Activated CD4-positive, alpha-beta T cell treated with anti-CD3 and anti-CD28 coated beads, Interleukin-2, amount 10 ng/mL, durations not matched to agents 7 days and 5 days (primary cell): ENCODE measurements at regions of chr9 and their contacts with region 1.

Region 1: GRCh38 chr9:128818099-128818838 is at the start of gene ENDOG:
- DNase-seq: peak; percentile 97
- H3K4me3 Mint-ChIP-seq: peak within 1 kb of the TSS; percentile 84
- H3K27ac Mint-ChIP-seq: peak within 1 kb of the TSS; percentile 89
- H3K4me1 Mint-ChIP-seq: peaks cover 24% of the 10 kb centered on the region
- H3K27me3 Mint-ChIP-seq: no peaks in the 10 kb centered on the region
- total RNA-seq, gene ENDOG: 10.2 to 11.3 TPM

Region 2: GRCh38 chr9:128694344-128694743 is 123.9 kb before region 1 on chr9:
- CTCF ChIA-PET with region 1: interaction called, 13 read pairs
- POLR2A ChIA-PET with region 1: no interaction called
- DNase-seq: no peak
- H3K4me3 Mint-ChIP-seq: no peak overlapping the region
- H3K27ac Mint-ChIP-seq: no peak overlapping the region
- H3K4me1 Mint-ChIP-seq: peaks cover 20% of the 10 kb centered on the region
- H3K27me3 Mint-ChIP-seq: no peaks in the 10 kb centered on the region

Region 3: DNA sequence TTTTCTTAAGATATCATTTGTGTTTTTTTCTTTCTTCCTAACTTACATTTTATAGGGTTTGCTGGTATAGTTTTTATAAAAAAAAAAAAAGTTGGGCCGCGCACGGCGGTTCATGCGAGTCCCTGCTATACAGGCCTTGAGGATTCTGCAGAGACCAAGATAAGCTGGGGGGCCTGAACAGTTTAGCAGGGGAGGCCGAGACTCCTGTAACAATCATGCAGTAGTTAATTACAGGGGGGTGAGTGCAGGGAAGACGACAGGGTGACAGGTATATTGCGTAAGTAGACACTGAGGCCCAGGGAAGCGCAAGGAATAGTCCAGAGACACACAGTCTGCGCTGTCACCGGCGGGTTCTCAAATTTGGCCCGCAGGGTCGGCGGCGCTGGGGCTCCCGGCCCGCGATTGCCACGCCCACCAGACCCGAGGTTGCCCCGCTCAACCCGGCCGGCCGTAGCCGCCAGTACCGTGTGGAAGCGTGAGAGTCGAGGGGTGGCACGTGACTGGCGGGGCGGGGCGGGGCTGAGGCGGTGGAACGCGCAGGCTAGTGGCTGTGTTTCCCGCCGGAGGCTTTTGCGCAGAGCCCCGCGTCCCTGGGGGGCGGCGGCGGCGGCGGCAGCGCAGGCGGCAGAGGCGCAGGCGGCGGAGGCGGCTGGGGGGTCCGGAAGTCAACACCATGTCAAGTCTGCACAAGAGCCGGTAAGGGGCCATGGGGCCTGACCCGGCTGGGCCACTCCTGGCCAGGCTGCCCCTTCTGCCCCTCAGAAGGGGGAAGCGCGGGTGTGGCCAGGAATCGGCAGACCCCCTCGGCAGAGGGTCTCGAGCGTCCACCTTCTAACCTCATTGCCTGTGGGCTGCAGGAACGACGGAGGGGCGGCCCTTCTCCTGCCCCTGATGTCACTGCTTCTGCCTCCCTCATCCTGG is 31.3 kb before region 1 on chr9 and contains the start of gene TBC1D13:
- CTCF ChIA-PET with region 1: interaction called, 13 read pairs
- POLR2A ChIA-PET with region 1: no interaction called
- DNase-seq: peak; percentile 88
- H3K4me3 Mint-ChIP-seq: peak within 1 kb of the TSS; percentile 97
- H3K27ac Mint-ChIP-seq: peak within 1 kb of the TSS; percentile 94
- H3K4me1 Mint-ChIP-seq: peaks cover 17% of the 10 kb centered on the region
- H3K27me3 Mint-ChIP-seq: no peaks in the 10 kb centered on the region
- total RNA-seq, gene TBC1D13: 18.4 to 21.1 TPM

Region 4: DNA sequence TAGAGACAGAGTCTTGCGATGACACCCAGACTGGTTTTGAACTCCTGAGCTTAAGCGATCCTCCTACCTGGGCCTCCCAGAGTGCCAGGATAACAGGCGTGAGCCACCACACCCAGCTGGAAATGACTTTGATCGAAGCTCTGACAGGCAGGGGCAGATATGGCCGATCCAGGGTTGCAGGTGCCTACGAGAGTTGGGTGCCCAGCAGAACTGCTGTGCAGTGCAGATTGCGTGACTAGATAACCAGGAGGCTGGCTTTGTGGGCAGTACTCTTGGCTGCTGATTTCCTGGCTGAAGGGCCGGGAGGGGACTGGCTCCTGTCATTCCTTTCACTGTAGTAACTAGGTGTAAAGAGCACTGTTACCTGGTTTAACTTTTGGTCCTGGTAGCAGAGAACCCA is 19.4 kb before region 1 on chr9:
- CTCF ChIA-PET with region 1: interaction called, 29 read pairs
- POLR2A ChIA-PET with region 1: interaction called, 5 read pairs
- DNase-seq: no peak
- H3K4me3 Mint-ChIP-seq: no peak overlapping the region
- H3K27ac Mint-ChIP-seq: no peak overlapping the region
- H3K4me1 Mint-ChIP-seq: no peaks in the 10 kb centered on the region
- H3K27me3 Mint-ChIP-seq: no peaks in the 10 kb centered on the region

Region 5: GRCh38 chr9:128829477-128830251 is 11.4 kb after region 1 on chr9 and contains the start of gene SPOUT1:
- CTCF ChIA-PET with region 1: interaction called, 29 read pairs
- POLR2A ChIA-PET with region 1: interaction called, 12 read pairs
- DNase-seq: peak; percentile 96
- H3K4me3 Mint-ChIP-seq: peak within 1 kb of the TSS; percentile 94
- H3K27ac Mint-ChIP-seq: peak within 1 kb of the TSS; percentile 92
- H3K4me1 Mint-ChIP-seq: peaks cover 26% of the 10 kb centered on the region
- H3K27me3 Mint-ChIP-seq: no peaks in the 10 kb centered on the region
- total RNA-seq, gene SPOUT1: 60.5 to 75.0 TPM

Region 6: GRCh38 chr9:128877490-128878226 is 59.4 kb after region 1 on chr9:
- CTCF ChIA-PET with region 1: interaction called, 11 read pairs
- POLR2A ChIA-PET with region 1: interaction called, 6 read pairs
- DNase-seq: no peak
- H3K4me3 Mint-ChIP-seq: no peak overlapping the region
- H3K27ac Mint-ChIP-seq: peak overlapping the region; percentile 57
- H3K4me1 Mint-ChIP-seq: peaks cover 31% of the 10 kb centered on the region
- H3K27me3 Mint-ChIP-seq: no peaks in the 10 kb centered on the region